B cell (primary cell): ENCODE measurements at regions of chr6 and their contacts with region 1.

Region 1: GRCh38 chr6:14381829-14382677 is 264.5 kb downstream of the CD83 start:
- DNase-seq: peak; percentile 30
- ATAC-seq: peak; percentile 28
- H3K4me3 ChIP-seq: no peak overlapping the region
- H3K4me3 Mint-ChIP-seq: peak overlapping the region; percentile 40
- H3K27ac ChIP-seq: no peak overlapping the region
- H3K27ac Mint-ChIP-seq: no peak overlapping the region
- H3K4me1 ChIP-seq: peaks cover 44 to 48% of the 10 kb centered on the region in 2 donors
- H3K4me1 Mint-ChIP-seq: peaks cover 58% of the 10 kb centered on the region
- H3K27me3 ChIP-seq: no peaks in the 10 kb centered on the region
- H3K27me3 Mint-ChIP-seq: no peaks in the 10 kb centered on the region
- CTCF ChIP-seq: no peak

Region 2: DNA sequence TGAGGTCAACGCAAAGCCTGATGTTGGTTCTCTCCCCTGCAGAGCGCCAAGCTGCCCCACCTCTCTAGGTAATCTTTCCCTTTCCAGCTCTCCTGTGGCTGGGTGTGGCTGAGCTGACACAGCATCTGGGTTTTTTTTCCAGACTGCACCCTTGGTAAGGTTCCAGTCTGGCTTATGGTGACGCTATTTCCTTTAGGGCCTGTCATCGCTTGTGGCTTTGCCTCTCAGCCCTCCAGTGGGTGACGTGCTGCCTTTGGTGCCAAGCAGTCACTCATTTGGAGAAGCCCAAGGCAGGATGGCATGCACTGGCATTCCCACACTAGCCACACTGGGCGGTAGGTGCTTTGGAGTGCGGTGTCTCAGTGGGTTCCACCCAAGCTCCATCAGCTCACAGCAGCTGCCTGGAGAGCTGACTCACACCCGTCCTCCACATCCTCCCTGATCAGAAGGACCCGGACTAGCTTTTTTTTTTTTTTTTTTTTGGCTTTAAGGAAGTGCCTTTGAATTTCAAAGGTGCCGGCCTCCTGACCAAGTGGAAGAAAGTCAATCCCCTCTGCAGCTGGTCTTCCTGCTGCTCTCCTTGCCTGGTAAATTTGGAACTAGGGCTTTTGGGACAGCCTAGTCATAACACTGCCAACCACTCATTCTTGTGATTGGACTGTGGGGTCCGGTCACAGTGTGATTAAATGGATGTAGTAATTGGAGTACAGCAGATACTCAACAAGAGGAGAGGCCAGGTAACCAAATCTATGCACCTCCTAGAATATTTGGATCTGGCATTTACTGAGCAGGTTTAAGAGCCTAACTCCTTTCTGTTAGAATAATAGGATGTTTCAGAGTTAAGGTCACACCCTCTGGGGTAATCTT is 110.9 kb before region 1 on chr6:
- CTCF ChIA-PET with region 1: no interaction called
- POLR2A ChIA-PET with region 1: interaction called, 10 read pairs
- intact Hi-C with region 1: no loop called
- DNase-seq: peak; percentile 23
- ATAC-seq: no peak
- H3K4me3 ChIP-seq: no peak overlapping the region
- H3K4me3 Mint-ChIP-seq: peak overlapping the region; percentile 52
- H3K27ac ChIP-seq: no peak overlapping the region
- H3K27ac Mint-ChIP-seq: peak overlapping the region; percentile 51
- H3K4me1 ChIP-seq: peaks cover 73 to 87% of the 10 kb centered on the region in 2 donors
- H3K4me1 Mint-ChIP-seq: peaks cover 90% of the 10 kb centered on the region
- H3K27me3 ChIP-seq: no peaks in the 10 kb centered on the region
- H3K27me3 Mint-ChIP-seq: no peaks in the 10 kb centered on the region
- CTCF ChIP-seq: no peak

Region 3: DNA sequence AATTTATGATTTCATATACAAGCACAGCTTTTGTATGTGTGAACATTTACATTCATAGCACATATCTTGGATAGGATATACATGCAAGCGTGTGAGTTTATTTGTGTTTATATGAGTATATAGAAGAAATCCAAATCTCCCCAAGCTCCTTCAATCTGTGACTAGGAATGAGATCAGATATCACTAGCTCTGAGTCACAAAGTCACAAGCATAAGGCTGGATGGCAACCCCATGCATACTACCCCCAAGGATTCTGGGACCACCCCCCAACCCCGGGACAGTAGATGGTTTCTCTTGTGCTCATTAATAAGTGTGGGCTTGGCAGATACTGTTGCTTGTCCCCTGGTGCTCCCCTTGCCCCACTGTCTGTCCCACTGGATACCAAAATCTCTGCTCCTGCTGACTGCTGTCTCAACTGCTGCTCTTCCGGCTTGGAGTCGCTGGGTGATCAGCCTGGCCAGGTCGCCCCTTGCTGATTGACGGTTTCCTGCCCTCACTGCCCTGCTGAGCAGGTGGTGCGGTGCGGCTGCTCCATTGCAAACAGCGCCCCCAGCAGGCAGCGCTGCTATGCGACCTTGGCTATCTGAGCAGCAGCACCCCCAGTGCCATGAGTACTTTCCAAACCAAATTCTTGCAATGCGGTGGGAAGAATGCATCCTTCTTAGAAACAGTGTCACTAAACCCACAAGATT is 14.9 kb after region 1 on chr6:
- CTCF ChIA-PET with region 1: interaction called, 3 read pairs
- POLR2A ChIA-PET with region 1: no interaction called
- intact Hi-C with region 1: loop called (anchors 2 kb)
- DNase-seq: peak; percentile 58
- ATAC-seq: peak; percentile 49
- H3K4me3 ChIP-seq: peak overlapping the region in 1 of 5 experiments; percentile 14
- H3K4me3 Mint-ChIP-seq: peak overlapping the region; percentile 68
- H3K27ac ChIP-seq: no peak overlapping the region
- H3K27ac Mint-ChIP-seq: peak overlapping the region; percentile 54
- H3K4me1 ChIP-seq: peaks cover 17 to 25% of the 10 kb centered on the region in 2 donors
- H3K4me1 Mint-ChIP-seq: peaks cover 26% of the 10 kb centered on the region
- H3K27me3 ChIP-seq: no peaks in the 10 kb centered on the region
- H3K27me3 Mint-ChIP-seq: no peaks in the 10 kb centered on the region
- CTCF ChIP-seq: peak; percentile 35